ENCODE measurements at regions of chr5 and their contacts with region 1.

Region 1: GRCh38 chr5:176447982-176448608 is at the start of gene FAF2:
- DNase-seq: peak; percentile 99
- CTCF ChIP-seq: peak; percentile 89

Region 2: DNA sequence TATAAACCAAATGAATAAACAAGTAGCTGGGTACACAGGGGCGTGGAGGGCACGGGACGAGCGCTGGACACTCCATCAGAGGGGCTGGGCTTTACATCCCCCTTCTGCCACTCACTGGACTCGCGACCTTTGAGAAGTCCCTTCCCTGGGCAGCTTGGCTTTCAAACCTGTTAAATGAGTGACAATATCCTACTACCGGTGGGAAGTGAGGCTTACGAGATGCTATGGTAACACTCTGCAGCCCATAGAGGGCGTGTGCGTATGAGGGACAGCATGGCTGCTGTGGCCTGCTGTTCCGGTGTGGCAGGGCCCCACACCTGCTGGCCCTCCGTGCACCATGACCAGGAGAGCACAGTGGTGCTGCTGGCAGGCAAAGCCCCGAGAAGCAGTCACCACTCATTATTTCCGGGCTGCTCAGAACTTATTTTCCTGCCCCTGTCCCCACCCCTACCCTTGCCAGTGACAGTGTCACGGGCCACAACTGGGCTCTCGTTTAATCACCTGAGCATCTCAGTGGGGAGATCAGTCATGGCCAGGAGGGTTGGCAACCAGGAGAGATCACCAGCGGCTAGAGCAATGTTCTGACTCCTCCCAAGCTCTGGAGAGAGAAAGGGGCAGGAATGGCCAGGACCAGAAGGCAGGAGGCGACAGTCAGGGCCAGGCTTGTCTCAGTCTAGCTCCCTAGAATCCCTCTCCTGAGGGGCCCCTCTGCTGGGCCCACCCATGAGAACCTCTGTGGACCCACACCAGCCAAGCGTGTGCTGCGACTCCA is 42.3 kb before region 1 on chr5:
- CTCF ChIA-PET with region 1: interaction called, 15 read pairs
- POLR2A ChIA-PET with region 1: no interaction called
- DNase-seq: no peak
- CTCF ChIP-seq: no peak

Region 3: GRCh38 chr5:176436661-176437071 is 11.4 kb before region 1 on chr5:
- CTCF ChIA-PET with region 1: interaction called, 10 read pairs
- POLR2A ChIA-PET with region 1: no interaction called
- DNase-seq: no peak
- CTCF ChIP-seq: no peak

Region 4: GRCh38 chr5:176466245-176466871 is 18.3 kb after region 1 on chr5:
- CTCF ChIA-PET with region 1: interaction called, 47 read pairs
- POLR2A ChIA-PET with region 1: no interaction called
- DNase-seq: no peak
- CTCF ChIP-seq: no peak

Region 5: DNA sequence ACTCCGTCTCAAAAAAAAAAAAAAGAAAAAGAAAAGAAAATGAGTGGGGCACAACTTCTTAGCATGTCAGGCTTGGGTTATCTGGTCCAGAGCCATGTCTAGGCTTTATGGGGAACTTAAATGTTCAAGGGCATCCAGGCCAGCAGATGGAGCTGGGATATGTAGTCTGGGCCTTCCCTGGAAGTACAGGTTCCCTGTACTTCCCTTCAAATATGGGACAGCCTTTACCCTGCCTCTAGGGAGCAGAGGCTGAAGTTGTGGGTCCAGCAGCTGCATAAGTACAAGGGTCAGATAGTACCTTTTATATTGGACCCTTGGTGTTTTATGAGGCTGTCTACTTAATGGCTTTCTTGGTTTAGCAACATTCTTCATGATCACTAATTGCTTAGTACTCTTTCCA is 42.2 kb after region 1 on chr5:
- CTCF ChIA-PET with region 1: interaction called, 10 read pairs
- POLR2A ChIA-PET with region 1: no interaction called
- DNase-seq: no peak
- CTCF ChIP-seq: no peak

Region 6: DNA sequence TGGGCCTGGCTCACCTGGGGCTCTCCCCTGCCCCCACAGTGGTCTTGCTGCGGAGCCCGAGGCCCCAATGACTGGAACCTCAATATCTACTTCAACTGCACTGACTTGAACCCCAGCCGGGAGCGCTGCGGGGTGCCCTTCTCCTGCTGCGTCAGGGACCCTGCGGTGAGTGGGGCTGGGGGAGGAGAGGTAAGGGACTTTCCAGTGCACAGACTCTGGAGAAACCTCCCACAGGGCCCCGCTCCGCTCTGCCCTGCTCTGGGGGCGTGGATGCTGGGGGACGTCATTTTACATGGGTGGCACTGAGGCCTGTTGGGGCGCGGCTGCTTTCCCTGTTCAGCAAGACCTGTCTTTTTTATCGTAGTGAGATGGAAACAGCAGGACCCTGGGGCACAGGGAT is 206.8 kb after region 1 on chr5:
- CTCF ChIA-PET with region 1: no interaction called
- POLR2A ChIA-PET with region 1: no interaction called
- DNase-seq: no peak
- CTCF ChIP-seq: no peak

Measured in GM10248 (cell line).